ENCODE measurements at regions of chr11 and their contacts with region 1.

Region 1: DNA sequence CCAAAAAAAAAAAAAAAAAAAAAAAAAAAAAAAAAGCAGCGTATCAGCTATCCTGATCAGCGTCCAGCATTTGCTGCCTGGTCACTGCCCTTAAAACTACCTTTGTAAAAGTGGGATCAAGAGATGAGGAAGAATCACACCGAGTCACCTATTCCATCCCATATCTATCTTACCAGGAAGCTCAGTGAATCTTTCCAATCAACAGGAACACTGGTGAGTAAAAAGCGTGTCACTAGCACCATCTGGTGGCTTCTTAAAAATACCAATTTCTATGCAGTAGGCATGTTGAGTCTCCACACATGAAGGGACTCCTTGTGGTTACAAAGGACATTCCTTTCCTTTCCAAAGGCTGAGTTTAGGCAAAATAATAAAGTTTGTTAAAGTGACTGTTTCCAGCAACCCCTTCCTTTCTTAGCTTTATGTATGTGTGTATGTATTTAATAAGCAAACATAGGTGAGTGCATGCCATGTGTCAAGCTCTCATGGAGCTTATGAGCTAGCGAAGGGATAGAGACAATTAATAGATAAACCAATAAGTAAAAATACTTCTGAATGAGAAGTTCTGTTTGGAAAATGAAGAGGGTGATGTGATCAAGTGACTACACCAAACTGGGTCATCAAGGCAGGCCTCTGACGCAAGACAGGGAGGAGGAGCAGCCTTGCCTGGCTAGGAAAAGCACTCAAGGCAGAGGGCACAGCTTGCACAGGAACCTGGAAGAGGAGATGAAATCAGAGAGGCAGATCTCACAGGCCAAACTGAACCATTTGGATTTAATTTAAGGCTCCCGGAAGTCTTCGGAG is 13.9 kb upstream of the TP53AIP1 start:
- DNase-seq: peak; percentile 45
- ATAC-seq: peak; percentile 44
- H3K4me3 Mint-ChIP-seq: no peak overlapping the region
- H3K27ac Mint-ChIP-seq: no peak overlapping the region
- H3K4me1 Mint-ChIP-seq: no peaks in the 10 kb centered on the region
- H3K27me3 Mint-ChIP-seq: peaks cover 20% of the 10 kb centered on the region

Region 2: GRCh38 chr11:128859563-128860441 is 96.8 kb before region 1 on chr11:
- CTCF ChIA-PET with region 1: no interaction called
- POLR2A ChIA-PET with region 1: no interaction called
- DNase-seq: peak; percentile 82
- ATAC-seq: peak; percentile 92
- H3K4me3 Mint-ChIP-seq: no peak overlapping the region
- H3K27ac Mint-ChIP-seq: no peak overlapping the region
- H3K4me1 Mint-ChIP-seq: peaks cover 8% of the 10 kb centered on the region
- H3K27me3 Mint-ChIP-seq: peaks cover 18% of the 10 kb centered on the region

Region 3: GRCh38 chr11:128905345-128906184 is 51.0 kb before region 1 on chr11:
- CTCF ChIA-PET with region 1: interaction called, 16 read pairs
- POLR2A ChIA-PET with region 1: no interaction called
- DNase-seq: peak; percentile 52
- ATAC-seq: peak; percentile 76
- H3K4me3 Mint-ChIP-seq: peak overlapping the region; percentile 70
- H3K27ac Mint-ChIP-seq: no peak overlapping the region
- H3K4me1 Mint-ChIP-seq: peaks cover 15% of the 10 kb centered on the region
- H3K27me3 Mint-ChIP-seq: peaks cover 53% of the 10 kb centered on the region

Region 4: GRCh38 chr11:128942817-128943427 is 13.7 kb before region 1 on chr11 and contains the start of gene TP53AIP1:
- CTCF ChIA-PET with region 1: interaction called, 10 read pairs
- POLR2A ChIA-PET with region 1: no interaction called
- DNase-seq: no peak
- ATAC-seq: no peak
- H3K4me3 Mint-ChIP-seq: no peak within 1 kb of the TSS
- H3K27ac Mint-ChIP-seq: no peak within 1 kb of the TSS
- H3K4me1 Mint-ChIP-seq: no peaks in the 10 kb centered on the region
- H3K27me3 Mint-ChIP-seq: no peaks in the 10 kb centered on the region
- total RNA-seq, gene TP53AIP1: not detected

Region 5: GRCh38 chr11:128970598-128971190 is 14.1 kb after region 1 on chr11:
- CTCF ChIA-PET with region 1: interaction called, 10 read pairs
- POLR2A ChIA-PET with region 1: no interaction called
- DNase-seq: peak; percentile 50
- ATAC-seq: peak; percentile 74
- H3K4me3 Mint-ChIP-seq: no peak overlapping the region
- H3K27ac Mint-ChIP-seq: peak overlapping the region; percentile 48
- H3K4me1 Mint-ChIP-seq: peaks cover 23% of the 10 kb centered on the region
- H3K27me3 Mint-ChIP-seq: no peaks in the 10 kb centered on the region

Region 6: GRCh38 chr11:129658526-129658867 is 701.9 kb after region 1 on chr11:
- CTCF ChIA-PET with region 1: no interaction called
- POLR2A ChIA-PET with region 1: no interaction called
- DNase-seq: no peak
- ATAC-seq: no peak
- H3K4me3 Mint-ChIP-seq: no peak overlapping the region
- H3K27ac Mint-ChIP-seq: no peak overlapping the region
- H3K4me1 Mint-ChIP-seq: no peaks in the 10 kb centered on the region
- H3K27me3 Mint-ChIP-seq: peaks cover 3% of the 10 kb centered on the region